Activated CD4-positive, alpha-beta memory T cell treated with anti-CD3 and anti-CD28 coated beads, Interleukin-2, amount 10 ng/mL, durations not matched to agents 7 days and 5 days (primary cell): ENCODE measurements at regions of chr1 and their contacts with region 1.

Region 1: GRCh38 chr1:109984456-109985275 is at the start of gene AHCYL1:
- DNase-seq: peak; percentile 99
- H3K4me3 Mint-ChIP-seq: peak within 1 kb of the TSS; percentile 99
- H3K27ac Mint-ChIP-seq: peak within 1 kb of the TSS; percentile 84
- H3K4me1 Mint-ChIP-seq: peaks cover 41% of the 10 kb centered on the region
- H3K27me3 Mint-ChIP-seq: peaks cover 2% of the 10 kb centered on the region
- total RNA-seq, gene AHCYL1: 56.5 to 57.0 TPM

Region 2: GRCh38 chr1:109620841-109621286 is 363.8 kb before region 1 on chr1:
- CTCF ChIA-PET with region 1: interaction called, 13 read pairs
- POLR2A ChIA-PET with region 1: no interaction called
- DNase-seq: peak; percentile 97
- H3K4me3 Mint-ChIP-seq: peak overlapping the region; percentile 97
- H3K27ac Mint-ChIP-seq: peak overlapping the region; percentile 93
- H3K4me1 Mint-ChIP-seq: peaks cover 77% of the 10 kb centered on the region
- H3K27me3 Mint-ChIP-seq: no peaks in the 10 kb centered on the region

Region 3: GRCh38 chr1:109655601-109656519 is 328.8 kb before region 1 on chr1 and contains the start of gene GSTM4:
- CTCF ChIA-PET with region 1: interaction called, 18 read pairs
- POLR2A ChIA-PET with region 1: interaction called, 5 read pairs
- DNase-seq: peak; percentile 71
- H3K4me3 Mint-ChIP-seq: peak within 1 kb of the TSS; percentile 77
- H3K27ac Mint-ChIP-seq: peak within 1 kb of the TSS; percentile 60
- H3K4me1 Mint-ChIP-seq: peaks cover 21% of the 10 kb centered on the region
- H3K27me3 Mint-ChIP-seq: peaks cover 35% of the 10 kb centered on the region
- total RNA-seq, gene GSTM4: 10.4 to 14.3 TPM

Region 4: DNA sequence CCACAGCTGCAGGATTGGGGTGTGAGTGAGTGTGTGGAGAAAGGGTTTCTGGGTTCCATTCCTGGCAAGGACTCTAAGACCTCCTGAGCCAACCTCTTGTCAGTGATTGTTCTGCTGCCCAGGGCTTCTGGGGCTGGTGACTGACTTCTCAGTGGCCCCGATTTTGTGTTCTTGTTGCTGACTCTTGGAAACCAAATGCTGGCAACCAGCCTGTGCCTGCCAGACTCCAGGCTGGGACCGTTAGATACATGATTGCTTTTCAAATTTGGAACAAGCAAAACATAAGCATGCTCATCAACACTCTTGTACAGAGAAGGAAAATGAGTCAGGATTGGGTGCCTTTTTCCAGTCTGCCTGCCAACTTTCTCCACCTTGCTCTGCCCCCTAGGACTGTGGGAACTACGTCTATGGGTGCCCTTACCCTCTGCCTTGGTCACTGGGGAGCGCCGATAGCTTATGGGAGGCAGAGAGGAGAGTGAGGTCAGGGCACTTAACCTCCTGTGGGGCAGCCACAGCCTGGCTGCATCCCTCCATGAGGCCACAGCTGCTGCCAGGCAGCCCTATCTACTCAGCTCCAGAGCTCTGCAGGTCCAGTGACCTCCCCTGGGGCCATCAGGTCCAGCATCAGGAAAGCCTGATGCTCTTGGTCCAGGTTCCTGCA is 181.6 kb before region 1 on chr1:
- CTCF ChIA-PET with region 1: interaction called, 39 read pairs
- POLR2A ChIA-PET with region 1: interaction called, 21 read pairs
- DNase-seq: no peak
- H3K4me3 Mint-ChIP-seq: peak overlapping the region; percentile 66
- H3K27ac Mint-ChIP-seq: peak overlapping the region; percentile 100
- H3K4me1 Mint-ChIP-seq: peaks cover 89% of the 10 kb centered on the region
- H3K27me3 Mint-ChIP-seq: no peaks in the 10 kb centered on the region

Region 5: DNA sequence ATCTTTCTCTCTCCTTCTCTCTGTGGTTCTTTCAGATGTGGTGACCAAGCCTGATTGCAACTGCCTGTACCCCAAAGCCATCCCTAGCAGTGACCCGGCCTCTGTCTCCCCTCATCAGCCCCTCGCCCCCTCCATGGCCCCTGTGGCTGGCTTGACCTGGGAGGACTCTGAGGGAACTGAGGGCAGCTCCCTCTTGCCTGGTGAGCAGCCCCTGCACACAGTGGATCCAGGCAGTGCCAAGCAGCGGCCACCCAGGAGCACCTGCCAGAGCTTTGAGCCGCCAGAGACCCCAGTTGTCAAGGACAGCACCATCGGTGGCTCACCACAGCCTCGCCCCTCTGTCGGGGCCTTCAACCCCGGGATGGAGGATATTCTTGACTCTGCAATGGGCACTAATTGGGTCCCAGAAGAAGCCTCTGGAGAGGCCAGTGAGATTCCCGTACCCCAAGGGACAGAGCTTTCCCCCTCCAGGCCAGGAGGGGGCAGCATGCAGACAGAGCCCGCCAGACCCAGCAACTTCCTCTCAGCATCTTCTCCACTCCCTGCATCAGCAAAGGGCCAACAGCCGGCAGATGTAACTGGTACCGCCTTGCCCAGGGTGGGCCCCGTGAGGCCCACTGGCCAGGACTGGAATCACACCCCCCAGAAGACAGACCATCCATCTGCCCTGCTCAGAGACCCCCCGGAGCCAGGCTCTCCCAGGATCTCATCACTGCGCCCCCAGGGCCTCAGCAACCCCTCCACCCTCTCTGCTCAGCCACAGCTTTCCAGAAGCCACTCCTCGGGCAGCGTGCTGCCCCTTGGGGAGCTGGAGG is 61.3 kb before region 1 on chr1:
- CTCF ChIA-PET with region 1: interaction called, 20 read pairs
- POLR2A ChIA-PET with region 1: interaction called, 5 read pairs
- DNase-seq: no peak
- H3K4me3 Mint-ChIP-seq: no peak overlapping the region
- H3K27ac Mint-ChIP-seq: peak overlapping the region; percentile 34
- H3K4me1 Mint-ChIP-seq: peaks cover 13% of the 10 kb centered on the region
- H3K27me3 Mint-ChIP-seq: no peaks in the 10 kb centered on the region

Region 6: GRCh38 chr1:110011527-110012041 is 26.9 kb after region 1 on chr1:
- CTCF ChIA-PET with region 1: interaction called, 61 read pairs
- POLR2A ChIA-PET with region 1: interaction called, 15 read pairs
- DNase-seq: peak; percentile 45
- H3K4me3 Mint-ChIP-seq: no peak overlapping the region
- H3K27ac Mint-ChIP-seq: peak overlapping the region; percentile 41
- H3K4me1 Mint-ChIP-seq: peaks cover 5% of the 10 kb centered on the region
- H3K27me3 Mint-ChIP-seq: no peaks in the 10 kb centered on the region

Region 7: GRCh38 chr1:110347182-110347893 is 362.7 kb after region 1 on chr1:
- CTCF ChIA-PET with region 1: no interaction called
- POLR2A ChIA-PET with region 1: no interaction called
- DNase-seq: no peak
- H3K4me3 Mint-ChIP-seq: no peak overlapping the region
- H3K27ac Mint-ChIP-seq: peak overlapping the region; percentile 32
- H3K4me1 Mint-ChIP-seq: peaks cover 90% of the 10 kb centered on the region
- H3K27me3 Mint-ChIP-seq: no peaks in the 10 kb centered on the region